Caco-2 (cell line): ENCODE measurements at regions of chr20 and their contacts with region 1.

Region 1: DNA sequence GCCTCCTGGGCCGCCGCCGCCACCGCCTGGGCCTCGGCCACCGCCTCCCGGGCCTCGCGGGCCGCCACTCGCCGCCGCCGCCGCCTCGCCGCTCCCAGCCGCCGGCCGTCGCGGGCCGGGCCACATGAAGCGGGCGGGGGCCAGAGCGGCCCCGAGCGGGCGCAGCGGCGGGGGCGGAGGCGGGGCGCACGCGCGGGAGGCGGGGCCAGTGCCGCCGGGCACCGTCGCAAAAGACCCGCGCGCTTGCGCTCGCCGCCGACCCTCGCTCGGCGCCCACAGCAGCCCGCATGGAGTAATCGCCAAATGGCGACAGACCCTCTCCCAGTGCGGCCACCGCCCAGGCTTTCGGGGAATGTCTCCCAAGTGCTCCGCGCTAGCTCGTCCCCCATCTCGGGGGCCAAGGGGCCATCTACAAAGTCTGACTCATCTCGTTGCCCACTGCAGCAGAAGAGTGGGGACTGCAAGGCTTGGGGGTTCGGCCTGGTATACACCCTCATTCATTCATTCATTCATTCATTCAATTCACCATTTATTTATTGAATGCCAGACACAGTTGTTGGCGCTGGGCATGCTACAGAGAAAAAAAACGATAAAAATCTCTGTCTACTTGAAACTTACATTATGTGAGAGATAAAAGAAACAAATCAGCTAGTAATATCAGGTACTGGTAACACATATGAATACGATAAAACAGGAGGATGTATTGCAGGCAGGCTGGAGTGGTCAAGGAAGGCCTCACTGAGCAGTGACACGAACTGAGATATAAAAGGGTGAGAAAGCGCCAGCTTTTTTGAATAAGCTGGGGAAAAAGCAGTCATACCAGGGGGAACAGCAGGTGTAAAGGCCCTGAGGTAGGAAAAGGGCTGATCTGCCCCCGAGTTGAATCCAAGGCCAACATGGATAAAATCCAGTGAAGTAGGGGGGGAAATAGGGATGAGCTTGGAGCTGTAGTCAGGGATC is at the start of gene B4GALT5:
- DNase-seq: peak; percentile 95
- H3K4me3 ChIP-seq: peak within 1 kb of the TSS; percentile 65
- H3K4me3 Mint-ChIP-seq: peak within 1 kb of the TSS; percentile 81
- H3K27ac Mint-ChIP-seq: peak within 1 kb of the TSS; percentile 79
- H3K4me1 ChIP-seq: peaks cover 25% of the 10 kb centered on the region
- H3K4me1 Mint-ChIP-seq: peaks cover 37% of the 10 kb centered on the region
- H3K27me3 ChIP-seq: no peaks in the 10 kb centered on the region
- H3K27me3 Mint-ChIP-seq: no peaks in the 10 kb centered on the region
- CTCF ChIP-seq: no peak
- total RNA-seq, gene B4GALT5: 65.0 and 67.1 TPM in 2 replicates

Region 2: DNA sequence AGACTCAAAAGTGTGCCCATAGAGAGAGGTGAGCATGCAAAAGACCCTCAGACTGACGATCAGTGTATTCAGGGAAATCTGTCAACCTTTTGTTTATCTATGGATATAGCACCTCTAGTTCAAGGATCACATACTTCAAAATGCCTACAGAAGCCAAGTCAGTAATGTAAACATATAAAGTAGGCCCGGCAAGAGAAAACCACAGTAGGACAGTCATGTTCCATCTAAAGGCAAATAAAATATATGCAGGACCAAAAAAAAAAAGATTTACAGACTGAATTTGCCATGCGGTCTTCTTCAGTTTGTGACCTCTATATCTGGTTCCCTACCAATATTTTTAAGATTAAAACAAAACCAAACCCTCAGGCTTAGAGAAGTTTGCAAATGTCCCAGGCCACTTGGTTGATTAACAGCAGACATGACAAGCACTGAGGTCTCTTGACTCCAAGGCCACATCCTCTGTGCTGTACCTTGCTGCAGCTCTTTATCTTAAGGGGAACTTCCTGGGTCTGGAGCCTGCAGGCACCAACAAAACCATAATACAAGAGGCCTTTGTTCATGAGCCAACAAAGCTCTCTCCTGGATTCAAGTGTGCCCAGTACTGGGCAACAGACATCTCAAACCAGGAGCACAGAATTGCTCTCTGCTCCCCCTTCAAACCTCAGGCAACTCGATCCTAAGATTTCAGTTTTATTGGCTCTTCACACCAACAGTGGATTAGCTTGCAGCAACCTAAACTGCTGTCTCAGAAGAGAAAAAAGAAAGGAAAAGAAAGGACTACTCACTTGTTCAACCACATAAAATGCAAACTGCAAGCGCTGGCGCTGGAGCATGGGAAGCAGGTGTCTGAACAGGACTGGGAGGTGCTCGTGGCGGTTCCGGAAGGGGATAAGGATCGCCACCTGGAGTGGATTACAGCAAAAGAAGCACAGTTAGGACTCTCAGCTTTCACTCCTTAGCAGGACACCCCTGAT is 72.1 kb before region 1 on chr20:
- CTCF ChIA-PET with region 1: no interaction called
- POLR2A ChIA-PET with region 1: no interaction called
- intact Hi-C with region 1: no loop called
- DNase-seq: no peak
- H3K4me3 ChIP-seq: no peak overlapping the region
- H3K4me3 Mint-ChIP-seq: no peak overlapping the region
- H3K27ac Mint-ChIP-seq: no peak overlapping the region
- H3K4me1 ChIP-seq: no peaks in the 10 kb centered on the region
- H3K4me1 Mint-ChIP-seq: no peaks in the 10 kb centered on the region
- H3K27me3 ChIP-seq: no peaks in the 10 kb centered on the region
- H3K27me3 Mint-ChIP-seq: no peaks in the 10 kb centered on the region
- CTCF ChIP-seq: no peak

Region 3: GRCh38 chr20:49690899-49691620 is 23.0 kb before region 1 on chr20:
- CTCF ChIA-PET with region 1: no interaction called
- POLR2A ChIA-PET with region 1: interaction called, 15 read pairs
- intact Hi-C with region 1: no loop called
- DNase-seq: peak; percentile 55 to 69
- H3K4me3 ChIP-seq: no peak overlapping the region
- H3K4me3 Mint-ChIP-seq: peak overlapping the region; percentile 35
- H3K27ac Mint-ChIP-seq: peak overlapping the region; percentile 75
- H3K4me1 ChIP-seq: peaks cover 63% of the 10 kb centered on the region
- H3K4me1 Mint-ChIP-seq: peaks cover 69% of the 10 kb centered on the region
- H3K27me3 ChIP-seq: no peaks in the 10 kb centered on the region
- H3K27me3 Mint-ChIP-seq: no peaks in the 10 kb centered on the region
- CTCF ChIP-seq: no peak

Region 4: GRCh38 chr20:49785852-49786175 is 71.8 kb after region 1 on chr20:
- CTCF ChIA-PET with region 1: no interaction called
- POLR2A ChIA-PET with region 1: no interaction called
- intact Hi-C with region 1: loop called (anchors 5 kb)
- DNase-seq: no peak
- H3K4me3 ChIP-seq: no peak overlapping the region
- H3K4me3 Mint-ChIP-seq: no peak overlapping the region
- H3K27ac Mint-ChIP-seq: no peak overlapping the region
- H3K4me1 ChIP-seq: peaks cover 23% of the 10 kb centered on the region
- H3K4me1 Mint-ChIP-seq: peaks cover 11% of the 10 kb centered on the region
- H3K27me3 ChIP-seq: no peaks in the 10 kb centered on the region
- H3K27me3 Mint-ChIP-seq: no peaks in the 10 kb centered on the region
- CTCF ChIP-seq: no peak

Region 5: GRCh38 chr20:49812463-49813304 is 98.7 kb after region 1 on chr20 and contains the start of gene SLC9A8:
- CTCF ChIA-PET with region 1: interaction called, 3 read pairs
- POLR2A ChIA-PET with region 1: interaction called, 3 read pairs
- intact Hi-C with region 1: loop called (anchors 2 kb)
- DNase-seq: peak; percentile 97 to 98
- H3K4me3 ChIP-seq: peak within 1 kb of the TSS; percentile 68
- H3K4me3 Mint-ChIP-seq: peak within 1 kb of the TSS; percentile 97
- H3K27ac Mint-ChIP-seq: peak within 1 kb of the TSS; percentile 96
- H3K4me1 ChIP-seq: peaks cover 25% of the 10 kb centered on the region
- H3K4me1 Mint-ChIP-seq: peaks cover 41% of the 10 kb centered on the region
- H3K27me3 ChIP-seq: no peaks in the 10 kb centered on the region
- H3K27me3 Mint-ChIP-seq: no peaks in the 10 kb centered on the region
- CTCF ChIP-seq: peak; percentile 38 to 44
- total RNA-seq, gene SLC9A8: 19.5 and 21.4 TPM in 2 replicates